H1 (cell line): ENCODE measurements at regions of chr17 and their contacts with region 1.

Region 1: DNA sequence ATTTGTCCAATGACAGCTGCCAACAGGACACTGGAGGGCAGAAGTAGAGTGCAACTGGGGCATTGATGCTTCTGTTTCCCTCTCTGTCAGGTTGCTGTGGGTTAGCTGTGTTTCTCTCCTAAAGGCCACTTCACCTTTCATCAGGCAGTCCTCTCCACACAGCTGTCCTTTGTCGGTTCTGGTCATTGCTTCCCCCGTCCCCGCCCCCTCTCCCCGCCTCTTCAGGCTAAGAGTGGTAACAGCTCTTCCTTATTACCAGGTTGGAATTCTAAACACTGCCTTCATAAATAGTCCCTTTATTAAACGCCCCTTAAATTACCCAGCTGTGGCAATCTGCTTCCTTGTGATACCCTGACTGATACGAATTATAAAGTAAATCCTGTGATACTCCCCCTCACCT is 31.8 kb upstream of the NSRP1 start:
- DNase-seq: no peak
- H3K4me3 ChIP-seq: no peak overlapping the region
- H3K27ac ChIP-seq: no peak overlapping the region
- H3K4me1 ChIP-seq: no peaks in the 10 kb centered on the region
- H3K27me3 ChIP-seq: no peaks in the 10 kb centered on the region; a peak in 1 of 7 replicates
- CTCF ChIP-seq: no peak
- EP300 ChIP-seq: no peak
- POLR2A ChIP-seq: no peak
- RAD21 ChIP-seq: no peak

Region 2: GRCh38 chr17:30104575-30105339 is 20.0 kb after region 1 on chr17:
- CTCF ChIA-PET with region 1: interaction called, 10 read pairs
- POLR2A ChIA-PET with region 1: interaction called, 3 read pairs
- DNase-seq: peak; percentile 56 to 77
- H3K4me3 ChIP-seq: peak overlapping the region; percentile 28 to 61 (median 52); a peak in 7 of 8 replicates
- H3K27ac ChIP-seq: no peak overlapping the region
- H3K4me1 ChIP-seq: no peaks in the 10 kb centered on the region
- H3K27me3 ChIP-seq: no peaks in the 10 kb centered on the region
- CTCF ChIP-seq: peak; percentile 80 to 88 (median 81)
- EP300 ChIP-seq: no peak
- POLR2A ChIP-seq: peak; percentile 37 to 47; a peak in 2 of 3 replicates
- RAD21 ChIP-seq: peak; percentile 79 to 86